Breast epithelium (tissue), 4 donors: ENCODE measurements at regions of chr6 and their contacts with region 1.

Region 1: DNA sequence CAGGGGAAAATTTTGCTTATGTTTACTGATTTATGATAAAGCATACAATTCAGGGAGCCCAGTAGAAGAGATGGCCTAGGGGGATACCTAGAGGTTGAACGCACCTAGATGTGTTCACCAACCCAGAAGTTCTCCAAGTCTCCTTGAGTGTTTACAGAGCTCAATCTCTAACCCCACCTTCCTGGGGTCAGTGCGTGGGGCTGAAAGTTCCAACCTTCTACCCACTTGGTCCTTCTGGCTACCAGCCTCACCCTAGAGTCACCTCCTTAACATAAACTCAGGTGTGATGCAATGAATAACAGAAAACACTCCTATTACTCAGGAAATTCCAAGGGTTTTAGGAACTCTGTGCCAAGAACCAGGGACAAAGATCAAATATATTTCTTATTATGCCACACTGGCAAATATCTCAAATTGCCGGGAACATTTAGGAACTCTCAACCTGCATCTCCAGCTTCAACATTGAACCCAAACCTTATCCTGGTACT is 26.4 kb downstream of the AFG1L start:
- DNase-seq: no peak
- H3K4me3 ChIP-seq: no peak overlapping the region
- H3K27ac ChIP-seq: no peak overlapping the region
- H3K4me1 ChIP-seq: no peaks in the 10 kb centered on the region
- H3K27me3 ChIP-seq: no peaks in the 10 kb centered on the region
- CTCF ChIP-seq: no peak
- POLR2A ChIP-seq: no peak

Region 2: DNA sequence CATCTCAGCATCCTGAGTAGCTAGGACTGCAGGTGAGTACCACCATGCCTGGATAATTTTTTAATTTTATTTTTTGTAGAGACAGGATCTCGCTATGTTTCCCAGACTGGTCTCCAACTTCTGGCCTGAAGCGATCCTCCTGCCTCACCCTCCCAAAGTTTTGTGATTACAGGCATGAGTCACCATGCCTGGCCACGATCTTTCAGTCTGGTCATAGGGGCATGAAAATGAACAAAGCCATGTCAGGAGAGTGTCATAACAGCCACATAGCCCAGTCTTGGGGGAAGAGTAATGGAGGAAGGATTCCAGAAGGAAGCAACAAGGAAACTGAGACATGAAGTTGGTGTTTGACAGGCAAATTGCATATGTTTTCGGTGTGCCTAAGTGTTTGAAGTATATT is 43.5 kb before region 1 on chr6:
- intact Hi-C with region 1: loop called (anchors 2 kb)
- DNase-seq: no peak
- H3K4me3 ChIP-seq: no peak overlapping the region
- H3K27ac ChIP-seq: no peak overlapping the region
- H3K4me1 ChIP-seq: no peaks in the 10 kb centered on the region
- H3K27me3 ChIP-seq: no peaks in the 10 kb centered on the region
- CTCF ChIP-seq: no peak
- POLR2A ChIP-seq: no peak

Region 3: DNA sequence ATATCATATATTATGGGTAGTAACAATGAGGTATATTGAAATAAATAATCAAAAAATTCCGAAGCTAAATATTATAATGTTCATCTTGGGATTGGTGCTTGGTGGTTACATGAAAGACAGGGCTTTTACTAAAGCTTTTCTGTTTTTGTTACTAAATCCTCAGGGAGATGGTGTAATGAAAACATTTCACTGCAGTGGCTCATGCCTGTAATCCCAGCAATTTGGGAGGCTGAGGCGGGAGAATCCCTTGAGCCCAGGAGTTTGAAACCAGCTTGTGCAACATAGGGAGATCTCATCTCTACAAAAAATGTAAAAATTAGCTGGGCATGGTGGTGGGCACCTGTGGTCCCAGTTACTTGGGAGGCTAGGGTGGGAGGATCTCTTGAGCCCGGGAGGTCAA is 16.4 kb after region 1 on chr6:
- intact Hi-C with region 1: no loop called
- DNase-seq: no peak
- H3K4me3 ChIP-seq: no peak overlapping the region
- H3K27ac ChIP-seq: no peak overlapping the region
- H3K4me1 ChIP-seq: no peaks in the 10 kb centered on the region
- H3K27me3 ChIP-seq: no peaks in the 10 kb centered on the region
- CTCF ChIP-seq: no peak
- POLR2A ChIP-seq: no peak